AG04449 (cell line): ENCODE measurements at regions of chr14 and their contacts with region 1.

Region 1: DNA sequence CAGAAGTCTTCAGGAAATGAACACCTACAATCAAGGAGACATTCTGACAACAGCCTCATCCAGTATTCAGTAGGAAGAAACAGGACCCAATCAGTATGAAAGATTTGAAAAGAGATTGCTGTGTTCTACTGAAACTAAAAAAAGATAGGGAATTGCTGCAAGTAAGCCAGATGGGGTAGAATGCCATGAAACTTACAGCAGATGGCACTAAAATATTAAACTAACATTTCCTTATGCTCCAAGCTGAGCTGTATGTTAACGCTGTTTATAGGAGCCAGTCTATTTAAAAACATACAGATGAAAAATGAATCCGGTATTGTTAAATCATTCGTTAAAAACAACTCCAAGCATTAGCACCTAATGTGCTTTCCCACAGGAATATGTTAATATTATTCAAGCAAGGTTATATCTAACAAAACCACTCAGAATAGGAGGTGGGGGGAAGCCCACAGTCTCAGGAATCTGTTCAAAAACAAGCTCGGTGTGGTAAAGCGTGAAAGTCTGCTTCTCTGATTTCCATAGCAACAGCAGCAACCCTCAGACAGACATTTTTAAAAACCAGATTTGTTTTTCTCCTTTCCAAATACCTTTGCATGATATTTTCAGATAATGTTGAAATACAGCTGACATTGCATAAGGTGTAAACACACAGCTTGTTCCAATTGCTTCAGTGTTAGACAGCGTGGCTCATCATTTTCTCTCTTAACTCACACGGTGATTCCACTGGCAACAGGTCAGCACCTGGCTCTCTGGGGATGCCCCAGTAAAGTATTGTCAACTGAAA is 131.4 kb upstream of the CCDC175 start:
- DNase-seq: no peak
- H3K4me3 ChIP-seq: no peak overlapping the region
- CTCF ChIP-seq: no peak

Region 2: GRCh38 chr14:59829469-59830337 is 121.7 kb after region 1 on chr14:
- CTCF ChIA-PET with region 1: no interaction called
- POLR2A ChIA-PET with region 1: no interaction called
- DNase-seq: no peak
- H3K4me3 ChIP-seq: no peak overlapping the region
- CTCF ChIP-seq: no peak

Region 3: DNA sequence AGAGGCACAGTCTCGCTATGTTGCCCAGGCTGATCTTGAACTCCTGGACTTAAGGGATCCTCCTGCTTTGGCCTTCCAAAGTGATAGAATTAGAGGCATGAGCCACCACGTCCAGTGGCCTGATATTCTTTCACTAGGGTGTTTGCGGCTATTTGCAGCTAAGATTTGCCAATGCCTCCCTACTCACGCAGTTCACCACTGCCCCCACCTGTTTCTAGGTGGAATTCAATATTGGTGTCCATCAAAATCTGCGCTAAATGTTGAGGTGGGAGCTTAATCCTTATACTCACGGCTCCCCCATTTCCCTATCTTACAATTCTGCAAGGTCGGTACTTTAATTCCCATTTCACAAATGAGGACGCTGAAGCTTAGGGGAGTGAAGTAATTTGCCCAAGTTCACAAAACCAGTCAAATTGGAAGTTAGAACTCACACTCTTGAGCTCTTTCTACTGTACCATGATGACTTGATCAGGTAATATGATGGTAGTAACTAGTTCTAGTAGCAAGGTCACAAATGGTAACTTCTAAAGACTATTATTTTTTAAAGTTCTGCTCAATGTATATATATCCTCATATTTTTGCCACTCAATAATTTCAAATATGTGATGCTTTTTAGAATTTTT is 189.9 kb after region 1 on chr14:
- CTCF ChIA-PET with region 1: interaction called, 17 read pairs
- POLR2A ChIA-PET with region 1: no interaction called
- DNase-seq: no peak
- H3K4me3 ChIP-seq: no peak overlapping the region
- CTCF ChIP-seq: no peak